ENCODE measurements at regions of chr14 and their contacts with region 1.

Region 1: GRCh38 chr14:35404449-35405303 is at the start of gene NFKBIA:
- DNase-seq: peak; percentile 94
- H3K4me3 ChIP-seq: peak within 1 kb of the TSS; percentile 69 to 92 (median 78)
- H3K27ac ChIP-seq: peak within 1 kb of the TSS; percentile 95
- H3K4me1 ChIP-seq: peaks cover 38% of the 10 kb centered on the region
- H3K27me3 ChIP-seq: no peaks in the 10 kb centered on the region
- CTCF ChIP-seq: peak; percentile 2 to 43
- total RNA-seq, gene NFKBIA: 81.0 to 86.7 TPM

Region 2: GRCh38 chr14:34665785-34666435 is 738.8 kb before region 1 on chr14:
- CTCF ChIA-PET with region 1: no interaction called
- dilution Hi-C with region 1: no loop called
- in situ Hi-C with region 1: loop called in 1 of 2 experiments (anchors 25 kb)
- intact Hi-C with region 1: no loop called
- DNase-seq: peak; percentile 57
- H3K4me3 ChIP-seq: no peak overlapping the region
- H3K27ac ChIP-seq: no peak overlapping the region
- H3K4me1 ChIP-seq: peaks cover 11% of the 10 kb centered on the region
- H3K27me3 ChIP-seq: no peaks in the 10 kb centered on the region
- CTCF ChIP-seq: no peak

Region 3: DNA sequence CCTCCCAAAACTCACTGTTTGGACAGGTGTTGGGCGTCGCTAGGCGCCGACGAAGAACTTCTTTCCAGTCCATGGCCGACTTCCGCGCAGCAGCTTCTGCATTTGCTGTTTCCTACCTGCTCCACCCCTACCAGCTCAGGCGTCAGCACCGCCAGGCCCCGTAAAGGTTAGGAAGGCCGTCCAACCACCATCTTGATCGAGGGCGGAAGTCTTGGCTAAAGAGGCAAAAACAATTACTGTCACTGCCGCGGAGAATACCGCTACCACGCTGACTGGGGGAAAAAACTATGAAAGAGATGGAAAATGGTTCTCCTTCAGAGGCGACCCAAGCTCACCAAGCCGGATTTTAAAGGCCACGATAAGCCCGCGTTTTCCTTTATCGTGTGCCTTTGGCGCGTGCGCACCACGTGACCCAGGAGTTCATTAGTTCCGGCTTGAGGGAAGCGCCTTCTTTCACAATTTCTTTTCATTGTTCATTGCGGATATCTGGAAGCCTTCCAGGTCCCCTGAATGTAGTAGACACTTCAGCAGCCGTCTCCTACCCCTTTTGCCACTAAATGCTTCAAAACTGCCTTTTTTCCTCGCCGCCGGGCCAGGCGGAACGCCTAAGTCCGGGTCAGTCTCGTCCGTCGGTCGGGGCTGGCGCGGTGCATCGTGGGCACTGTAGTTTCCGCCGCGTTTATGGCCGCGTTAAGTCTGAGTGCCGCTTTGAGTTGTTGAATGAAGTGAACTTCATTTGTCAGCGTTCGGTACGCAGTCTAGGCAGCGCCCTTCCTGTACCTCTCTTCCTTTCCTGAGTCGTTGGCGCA is 282.6 kb before region 1 on chr14 and contains the starts of genes PPP2R3C and PRORP:
- CTCF ChIA-PET with region 1: interaction called, 4 read pairs
- dilution Hi-C with region 1: no loop called
- in situ Hi-C with region 1: no loop called
- intact Hi-C with region 1: loop called (anchors 1 kb)
- DNase-seq: peak; percentile 99
- H3K4me3 ChIP-seq: peak within 1 kb of the TSS; percentile 54 to 67 (median 61)
- H3K27ac ChIP-seq: peak within 1 kb of the TSS; percentile 99
- H3K4me1 ChIP-seq: peaks cover 11% of the 10 kb centered on the region
- H3K27me3 ChIP-seq: no peaks in the 10 kb centered on the region
- CTCF ChIP-seq: no peak
- total RNA-seq, gene PPP2R3C: 12.2 to 18.7 TPM
- total RNA-seq, gene PRORP: 33.5 to 53.2 TPM

Region 4: GRCh38 chr14:35146711-35147149 is 257.9 kb before region 1 on chr14:
- CTCF ChIA-PET with region 1: no interaction called
- dilution Hi-C with region 1: no loop called
- in situ Hi-C with region 1: loop called in 1 of 2 experiments (anchors 5 kb)
- intact Hi-C with region 1: no loop called
- DNase-seq: no peak
- H3K4me3 ChIP-seq: no peak overlapping the region
- H3K27ac ChIP-seq: no peak overlapping the region
- H3K4me1 ChIP-seq: no peaks in the 10 kb centered on the region
- H3K27me3 ChIP-seq: no peaks in the 10 kb centered on the region
- CTCF ChIP-seq: no peak

Region 5: GRCh38 chr14:35229495-35230089 is 175.1 kb before region 1 on chr14:
- CTCF ChIA-PET with region 1: no interaction called
- dilution Hi-C with region 1: no loop called
- in situ Hi-C with region 1: no loop called
- intact Hi-C with region 1: loop called (anchors 1 kb)
- DNase-seq: no peak
- H3K4me3 ChIP-seq: no peak overlapping the region
- H3K27ac ChIP-seq: no peak overlapping the region
- H3K4me1 ChIP-seq: peaks cover 5% of the 10 kb centered on the region
- H3K27me3 ChIP-seq: no peaks in the 10 kb centered on the region
- CTCF ChIP-seq: peak; percentile 12 to 34

Region 6: GRCh38 chr14:35336494-35337268 is 68.0 kb before region 1 on chr14:
- CTCF ChIA-PET with region 1: no interaction called
- dilution Hi-C with region 1: loop called (anchors 5 kb)
- in situ Hi-C with region 1: no loop called
- intact Hi-C with region 1: loop called (anchors 1 kb)
- DNase-seq: peak; percentile 97
- H3K4me3 ChIP-seq: peak overlapping the region in 2 of 3 experiments; percentile 3 to 23
- H3K27ac ChIP-seq: peak overlapping the region; percentile 86
- H3K4me1 ChIP-seq: peaks cover 68% of the 10 kb centered on the region
- H3K27me3 ChIP-seq: no peaks in the 10 kb centered on the region
- CTCF ChIP-seq: peak in 1 of 2 donors; percentile 24

Region 7: DNA sequence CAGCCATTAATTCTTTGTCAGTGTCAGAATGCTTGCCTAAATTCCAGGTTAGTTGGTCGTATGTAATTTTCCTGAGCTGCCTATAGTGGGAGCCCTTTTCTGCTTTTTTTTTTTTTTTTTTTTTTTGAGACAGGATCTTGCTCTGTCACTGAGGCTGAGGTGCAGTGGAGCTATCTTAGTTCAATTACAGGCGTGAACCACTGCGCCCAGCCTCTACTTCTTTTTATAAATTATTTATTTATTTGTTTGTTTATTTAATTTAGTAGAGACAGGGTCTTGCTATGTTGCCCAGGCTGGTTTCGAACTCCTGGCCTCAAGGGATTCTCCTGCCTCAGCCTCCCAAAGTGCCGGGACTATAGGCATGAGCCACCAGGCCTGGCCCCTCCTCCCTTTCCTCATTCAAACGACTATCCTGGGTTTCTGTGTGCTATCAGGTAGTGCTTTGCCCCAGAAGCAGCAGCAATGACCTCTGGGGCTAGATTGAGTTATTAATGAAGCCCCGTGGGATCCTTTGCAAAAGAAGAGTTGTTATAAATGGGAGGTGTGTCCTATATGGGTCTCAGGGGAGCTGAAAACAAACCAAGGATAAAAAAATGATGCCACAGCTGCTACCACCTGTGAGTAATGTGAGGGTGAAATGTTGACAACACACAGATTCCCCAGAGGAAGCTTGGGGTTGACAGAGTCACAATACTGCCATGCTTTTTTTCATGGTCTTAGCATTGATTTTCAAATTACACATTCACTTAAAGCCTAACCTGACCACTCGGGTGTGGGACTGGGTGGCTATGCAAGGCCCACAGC is 34.4 kb after region 1 on chr14:
- CTCF ChIA-PET with region 1: interaction called, 10 read pairs
- dilution Hi-C with region 1: no loop called
- in situ Hi-C with region 1: no loop called
- intact Hi-C with region 1: no loop called
- DNase-seq: no peak
- H3K4me3 ChIP-seq: no peak overlapping the region
- H3K27ac ChIP-seq: no peak overlapping the region
- H3K4me1 ChIP-seq: no peaks in the 10 kb centered on the region
- H3K27me3 ChIP-seq: no peaks in the 10 kb centered on the region
- CTCF ChIP-seq: peak; percentile 62 to 73

Measured in mammary epithelial cell (primary cell).